K562 (cell line): ENCODE measurements at regions of chr19 and their contacts with region 1.

Region 1: DNA sequence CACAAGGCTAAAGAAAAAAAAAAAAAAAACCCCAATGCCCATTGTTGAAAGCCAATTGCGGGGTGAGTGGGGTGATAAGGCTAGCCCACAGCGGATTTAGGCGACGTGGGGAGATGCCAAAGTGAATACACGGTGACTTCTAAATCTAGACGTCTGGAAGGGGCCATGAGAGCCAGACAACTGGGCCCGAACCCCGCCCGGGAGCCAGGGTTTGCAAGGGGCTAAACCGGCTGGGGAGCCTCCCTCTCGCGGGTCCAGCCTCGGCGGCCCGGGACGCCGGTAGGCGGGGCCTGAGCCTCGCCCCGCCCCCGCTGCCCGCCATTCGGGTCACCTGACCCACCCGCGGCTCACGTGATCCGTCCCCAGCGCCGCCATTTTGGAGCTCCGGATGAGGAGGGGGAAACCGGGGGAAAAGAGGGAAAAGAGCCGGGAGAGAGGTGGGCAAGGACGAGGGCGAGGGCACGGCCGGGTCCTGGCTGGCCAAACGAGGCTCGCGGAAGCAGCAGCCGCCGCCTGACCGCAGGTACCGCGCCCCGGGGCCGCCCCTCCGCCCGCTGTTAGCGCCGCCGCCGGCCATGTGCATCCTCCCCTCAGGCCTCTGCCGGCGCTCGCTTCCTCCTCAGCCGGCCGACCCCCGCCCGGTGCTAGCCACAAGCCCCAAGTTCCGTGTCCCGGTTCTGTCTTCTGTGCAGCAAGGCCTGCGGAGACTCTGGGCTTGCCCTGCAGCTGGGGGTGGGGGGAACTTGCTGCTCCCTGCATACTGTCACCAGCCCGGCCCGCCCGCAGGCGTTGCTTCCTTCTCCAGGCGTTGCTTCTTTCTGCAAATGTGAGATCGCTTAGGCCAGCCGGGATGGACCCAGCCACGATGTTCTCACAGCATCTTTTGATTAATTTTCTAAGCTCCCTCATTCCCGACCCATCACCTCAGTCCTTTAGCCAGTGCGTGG is at the start of gene ZNF507:
- DNase-seq: peak; percentile 89 to 98 (median 96)
- ATAC-seq: peak; percentile 90
- H3K4me3 ChIP-seq: peak within 1 kb of the TSS; percentile 96
- H3K27ac ChIP-seq: peak within 1 kb of the TSS; percentile 83
- H3K4me1 ChIP-seq: peaks cover 0 to 7% of the 10 kb centered on the region in 2 experiments; a peak in 2 of 5 replicates
- H3K27me3 ChIP-seq: no peaks in the 10 kb centered on the region
- CTCF ChIP-seq: 0 out of 6 replicates have a peak, but pooled peaks of 1 of the 3 experiments have one; percentile 19
- EP300 ChIP-seq: no peak
- POLR2A ChIP-seq: peak; percentile 77
- RAD21 ChIP-seq: no peak
- polyA plus RNA-seq, gene ZNF507: 2.9 to 3.2 TPM

Region 2: GRCh38 chr19:32309711-32310390 is 35.7 kb before region 1 on chr19:
- CTCF ChIA-PET with region 1: no interaction called
- POLR2A ChIA-PET with region 1: no interaction called
- in situ Hi-C with region 1: no loop called
- intact Hi-C with region 1: no loop called
- DNase-seq: no peak
- ATAC-seq: no peak
- H3K4me3 ChIP-seq: no peak overlapping the region
- H3K27ac ChIP-seq: no peak overlapping the region
- H3K4me1 ChIP-seq: peaks cover 0 to 3% of the 10 kb centered on the region in 2 experiments; a peak in 1 of 5 replicates
- H3K27me3 ChIP-seq: peaks cover 28 to 33% of the 10 kb centered on the region in 2 experiments
- CTCF ChIP-seq: no peak
- EP300 ChIP-seq: no peak
- POLR2A ChIP-seq: no peak
- RAD21 ChIP-seq: no peak

Region 3: GRCh38 chr19:32363197-32363596 is 17.7 kb after region 1 on chr19:
- CTCF ChIA-PET with region 1: no interaction called
- POLR2A ChIA-PET with region 1: interaction called, 10 read pairs
- in situ Hi-C with region 1: no loop called
- intact Hi-C with region 1: no loop called
- DNase-seq: no peak
- ATAC-seq: no peak
- H3K4me3 ChIP-seq: no peak overlapping the region
- H3K27ac ChIP-seq: no peak overlapping the region
- H3K4me1 ChIP-seq: peaks cover 4 to 5% of the 10 kb centered on the region in 2 experiments; a peak in 3 of 5 replicates
- H3K27me3 ChIP-seq: no peaks in the 10 kb centered on the region
- CTCF ChIP-seq: no peak
- EP300 ChIP-seq: no peak
- POLR2A ChIP-seq: no peak
- RAD21 ChIP-seq: no peak